Mammary epithelial cell (primary cell): ENCODE measurements at regions of chr9 and their contacts with region 1.

Region 1: DNA sequence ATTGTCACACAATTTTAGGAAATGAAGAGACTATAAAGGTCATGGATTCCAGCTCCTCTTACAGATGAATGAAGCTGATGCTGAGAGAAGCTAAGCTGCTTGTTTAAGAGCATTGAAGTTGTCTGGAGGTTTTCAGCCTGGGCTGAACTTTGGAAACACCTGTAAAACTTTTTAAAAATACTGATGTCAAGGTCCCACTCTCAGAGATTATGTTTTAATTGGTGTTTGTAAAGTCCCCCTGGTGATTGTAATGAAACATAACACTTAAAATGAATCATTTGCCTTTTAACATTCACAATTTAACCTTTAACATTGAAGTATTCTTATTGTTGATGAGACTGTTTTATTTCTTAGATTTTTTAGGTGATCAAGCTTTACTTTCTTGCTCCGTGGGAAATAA is 16.4 kb downstream of the RAD23B start:
- DNase-seq: no peak
- H3K4me3 ChIP-seq: no peak overlapping the region
- H3K27ac ChIP-seq: no peak overlapping the region
- H3K4me1 ChIP-seq: peaks cover 6% of the 10 kb centered on the region
- H3K27me3 ChIP-seq: no peaks in the 10 kb centered on the region
- CTCF ChIP-seq: peak; percentile 21 to 29

Region 2: DNA sequence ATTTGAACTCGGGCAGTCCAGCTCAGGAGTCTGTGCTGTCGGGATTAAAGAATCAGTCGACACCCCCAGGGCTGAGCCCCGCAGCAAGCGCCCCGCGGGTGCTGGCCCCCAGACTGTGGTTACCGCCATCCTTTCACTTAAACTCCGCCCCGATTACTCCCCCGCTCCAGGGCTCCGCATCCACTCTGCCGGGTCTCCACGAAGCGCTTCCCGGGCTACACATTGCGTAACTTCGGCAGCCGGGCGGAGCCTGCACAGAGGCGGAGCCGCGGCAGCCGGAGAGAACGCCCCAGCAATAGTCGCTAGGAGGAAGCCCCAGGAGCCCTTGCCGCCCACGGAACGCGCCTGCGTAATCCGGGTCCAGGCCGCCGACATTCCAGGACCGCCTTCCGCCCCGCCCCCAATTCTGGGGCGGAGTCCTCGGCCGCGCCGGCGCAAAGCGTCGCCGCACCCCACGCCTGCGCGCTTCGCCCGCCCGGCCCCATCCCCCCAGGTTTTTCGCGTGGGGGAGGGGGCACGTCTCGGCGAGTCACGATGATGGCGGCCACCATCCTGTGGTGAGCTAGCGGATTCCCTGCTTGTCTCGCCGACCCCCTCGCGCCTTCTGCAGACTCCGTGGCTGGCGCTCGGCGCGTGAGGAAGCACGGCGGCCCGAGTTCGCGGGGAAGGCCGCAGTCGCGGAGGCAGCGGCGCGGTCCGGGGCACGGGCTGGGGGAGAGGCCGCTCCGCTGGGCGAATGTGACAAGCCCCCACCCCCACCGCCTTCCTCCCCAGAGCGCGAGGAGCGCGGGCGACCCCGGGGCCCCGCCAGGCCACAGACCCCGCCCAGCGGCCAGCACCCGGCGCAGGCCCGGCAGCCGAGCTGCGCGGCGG is 16.4 kb before region 1 on chr9 and contains the start of gene RAD23B:
- CTCF ChIA-PET with region 1: no interaction called
- dilution Hi-C with region 1: no loop called
- in situ Hi-C with region 1: no loop called
- intact Hi-C with region 1: loop called (anchors 2 kb)
- DNase-seq: peak; percentile 99
- H3K4me3 ChIP-seq: peak within 1 kb of the TSS; percentile 91 to 93 (median 92)
- H3K27ac ChIP-seq: peak within 1 kb of the TSS; percentile 83
- H3K4me1 ChIP-seq: peaks cover 28% of the 10 kb centered on the region
- H3K27me3 ChIP-seq: no peaks in the 10 kb centered on the region
- CTCF ChIP-seq: no peak
- total RNA-seq, gene RAD23B: 126 to 177 TPM